Caco-2 (cell line): ENCODE measurements at regions of chr2 and their contacts with region 1.

Region 1: GRCh38 chr2:212777020-212777491 is 238.5 kb upstream of the ERBB4 start:
- DNase-seq: peak; percentile 42 to 59
- H3K4me3 ChIP-seq: no peak overlapping the region
- H3K4me3 Mint-ChIP-seq: peak overlapping the region; percentile 56
- H3K27ac Mint-ChIP-seq: peak overlapping the region; percentile 44
- H3K4me1 ChIP-seq: peaks cover 8% of the 10 kb centered on the region
- H3K4me1 Mint-ChIP-seq: peaks cover 15% of the 10 kb centered on the region
- H3K27me3 ChIP-seq: no peaks in the 10 kb centered on the region; the same call in 1 of the 2 replicates
- H3K27me3 Mint-ChIP-seq: no peaks in the 10 kb centered on the region
- CTCF ChIP-seq: peak; percentile 50 to 67

Region 2: DNA sequence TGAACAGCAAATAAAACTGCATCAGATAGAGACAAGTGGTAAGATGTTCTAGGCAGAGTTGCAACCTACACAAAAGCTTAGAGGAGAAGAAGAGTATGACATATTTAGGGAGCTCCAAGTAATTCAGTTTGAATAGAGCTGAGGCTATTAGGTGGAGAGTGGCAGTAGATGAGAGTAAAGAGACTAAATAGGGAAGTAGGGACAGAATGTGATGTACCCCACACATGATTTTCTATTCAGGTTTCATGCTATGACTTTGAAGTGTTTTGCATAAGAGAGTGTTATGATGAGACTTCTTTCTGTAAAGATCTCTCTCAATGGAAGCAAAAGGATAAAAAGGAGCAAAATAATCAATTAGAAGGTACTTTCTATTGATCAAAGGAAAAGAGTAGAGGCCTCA is 31.7 kb before region 1 on chr2:
- CTCF ChIA-PET with region 1: no interaction called
- POLR2A ChIA-PET with region 1: no interaction called
- intact Hi-C with region 1: no loop called
- DNase-seq: no peak
- H3K4me3 ChIP-seq: no peak overlapping the region
- H3K4me3 Mint-ChIP-seq: no peak overlapping the region
- H3K27ac Mint-ChIP-seq: no peak overlapping the region
- H3K4me1 ChIP-seq: no peaks in the 10 kb centered on the region
- H3K4me1 Mint-ChIP-seq: no peaks in the 10 kb centered on the region
- H3K27me3 ChIP-seq: no peaks in the 10 kb centered on the region
- H3K27me3 Mint-ChIP-seq: peaks cover 3% of the 10 kb centered on the region
- CTCF ChIP-seq: no peak

Region 3: GRCh38 chr2:212797484-212798205 is 20.6 kb after region 1 on chr2:
- CTCF ChIA-PET with region 1: interaction called, 3 read pairs
- POLR2A ChIA-PET with region 1: no interaction called
- intact Hi-C with region 1: loop called (anchors 1 kb)
- DNase-seq: no peak
- H3K4me3 ChIP-seq: no peak overlapping the region
- H3K4me3 Mint-ChIP-seq: no peak overlapping the region
- H3K27ac Mint-ChIP-seq: no peak overlapping the region
- H3K4me1 ChIP-seq: no peaks in the 10 kb centered on the region
- H3K4me1 Mint-ChIP-seq: no peaks in the 10 kb centered on the region
- H3K27me3 ChIP-seq: no peaks in the 10 kb centered on the region
- H3K27me3 Mint-ChIP-seq: no peaks in the 10 kb centered on the region
- CTCF ChIP-seq: no peak

Region 4: DNA sequence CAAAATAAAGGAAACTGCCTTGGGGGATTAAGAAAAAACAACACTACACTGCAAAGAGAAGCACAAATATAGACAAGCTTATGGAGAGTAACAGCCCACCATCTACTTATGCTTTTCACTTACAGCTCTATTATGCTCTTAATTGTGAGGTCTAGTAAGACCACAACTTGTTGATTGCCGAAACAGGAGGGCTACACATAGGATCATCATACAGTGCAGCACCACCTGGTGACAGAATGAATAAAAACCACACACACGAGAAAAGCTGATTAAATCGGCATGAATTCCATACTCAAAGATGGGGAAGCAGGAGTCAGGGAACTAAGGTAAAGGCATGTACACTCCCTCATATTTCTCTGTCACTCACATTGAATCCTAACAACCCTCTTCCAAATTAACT is 115.1 kb after region 1 on chr2:
- CTCF ChIA-PET with region 1: interaction called, 6 read pairs
- POLR2A ChIA-PET with region 1: no interaction called
- intact Hi-C with region 1: loop called (anchors 1 kb)
- DNase-seq: peak in 1 of 2 experiments; percentile 23
- H3K4me3 ChIP-seq: no peak overlapping the region
- H3K4me3 Mint-ChIP-seq: no peak overlapping the region
- H3K27ac Mint-ChIP-seq: no peak overlapping the region
- H3K4me1 ChIP-seq: no peaks in the 10 kb centered on the region
- H3K4me1 Mint-ChIP-seq: no peaks in the 10 kb centered on the region
- H3K27me3 ChIP-seq: no peaks in the 10 kb centered on the region
- H3K27me3 Mint-ChIP-seq: no peaks in the 10 kb centered on the region
- CTCF ChIP-seq: peak in 1 of 2 experiments; percentile 15

Region 5: DNA sequence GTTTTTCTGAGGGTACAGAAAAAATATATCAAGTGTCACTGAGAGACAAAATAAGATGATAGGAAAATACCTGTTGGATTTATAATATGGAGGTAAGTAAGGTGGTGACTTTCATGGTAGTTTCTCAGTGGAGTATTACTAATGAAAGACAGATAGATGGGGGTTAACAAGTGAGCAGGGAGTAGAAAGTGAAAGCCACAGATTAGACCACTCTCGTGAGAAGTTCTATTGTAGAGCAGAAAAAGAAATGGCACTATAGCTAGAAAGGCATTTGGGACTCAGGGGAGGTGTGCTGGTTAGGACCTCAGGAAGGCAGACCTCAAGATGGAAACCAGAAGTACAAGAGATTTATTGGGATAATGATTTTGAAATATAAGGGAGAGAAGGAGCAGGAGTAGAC is 176.1 kb after region 1 on chr2:
- CTCF ChIA-PET with region 1: no interaction called
- POLR2A ChIA-PET with region 1: no interaction called
- intact Hi-C with region 1: no loop called
- DNase-seq: no peak
- H3K4me3 ChIP-seq: no peak overlapping the region
- H3K4me3 Mint-ChIP-seq: no peak overlapping the region
- H3K27ac Mint-ChIP-seq: no peak overlapping the region
- H3K4me1 ChIP-seq: no peaks in the 10 kb centered on the region
- H3K4me1 Mint-ChIP-seq: peaks cover 19% of the 10 kb centered on the region
- H3K27me3 ChIP-seq: no peaks in the 10 kb centered on the region
- H3K27me3 Mint-ChIP-seq: no peaks in the 10 kb centered on the region
- CTCF ChIP-seq: no peak

Region 6: DNA sequence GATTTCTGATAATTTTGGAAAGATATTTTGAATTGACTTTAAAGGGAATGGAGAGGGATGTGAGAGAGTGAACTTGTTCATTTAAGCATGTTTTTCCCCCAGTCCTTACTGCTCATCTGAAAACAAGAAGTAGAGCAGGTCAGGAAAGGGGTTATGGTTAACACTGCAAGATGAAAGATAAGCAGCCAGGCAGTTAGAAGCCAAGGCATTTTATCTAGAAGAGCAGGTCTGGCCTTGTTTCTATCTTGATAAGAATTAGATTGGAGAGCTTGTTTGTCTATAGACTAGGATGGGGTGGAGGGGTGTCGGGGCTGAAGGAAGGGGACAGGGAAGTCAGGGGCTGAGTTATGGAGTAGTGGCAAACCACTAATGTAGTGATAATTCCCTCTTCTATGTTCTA is 202.7 kb after region 1 on chr2:
- CTCF ChIA-PET with region 1: no interaction called
- POLR2A ChIA-PET with region 1: no interaction called
- intact Hi-C with region 1: loop called (anchors 10 kb)
- DNase-seq: peak; percentile 37 to 47
- H3K4me3 ChIP-seq: no peak overlapping the region
- H3K4me3 Mint-ChIP-seq: peak overlapping the region; percentile 17
- H3K27ac Mint-ChIP-seq: no peak overlapping the region
- H3K4me1 ChIP-seq: peaks cover 20% of the 10 kb centered on the region
- H3K4me1 Mint-ChIP-seq: peaks cover 19% of the 10 kb centered on the region
- H3K27me3 ChIP-seq: no peaks in the 10 kb centered on the region
- H3K27me3 Mint-ChIP-seq: no peaks in the 10 kb centered on the region
- CTCF ChIP-seq: no peak